PC-9 (cell line): ENCODE measurements at regions of chr9 and their contacts with region 1.

Region 1: GRCh38 chr9:87766703-87767102 is 40.8 kb downstream of the CTSL start:
- DNase-seq: peak; percentile 83 to 99
- H3K4me3 ChIP-seq: peak overlapping the region; percentile 42; the same call in 1 of the 2 replicates
- H3K27ac ChIP-seq: peak overlapping the region; percentile 91
- H3K4me1 ChIP-seq: peaks cover 27% of the 10 kb centered on the region
- H3K27me3 ChIP-seq: no peaks in the 10 kb centered on the region
- CTCF ChIP-seq: no peak

Region 2: GRCh38 chr9:87792831-87793288 is 26.2 kb after region 1 on chr9:
- CTCF ChIA-PET with region 1: no interaction called
- POLR2A ChIA-PET with region 1: interaction called, 9 read pairs
- intact Hi-C with region 1: loop called (anchors 1 kb)
- DNase-seq: peak; percentile 90 to 98
- H3K4me3 ChIP-seq: peak overlapping the region; percentile 48; the same call in 1 of the 2 replicates
- H3K27ac ChIP-seq: peak overlapping the region; percentile 100
- H3K4me1 ChIP-seq: peaks cover 70% of the 10 kb centered on the region
- H3K27me3 ChIP-seq: no peaks in the 10 kb centered on the region
- CTCF ChIP-seq: peak; percentile 54